Right cardiac atrium (tissue), 5 donors: ENCODE measurements at regions of chr4 and their contacts with region 1.

Region 1: GRCh38 chr4:119692001-119692400 is 63.4 kb upstream of the PDE5A start:
- DNase-seq: peak in 1 of 3 donors; percentile 48
- ATAC-seq: peak in 1 of 2 donors; percentile 76
- H3K4me3 ChIP-seq: no peak overlapping the region
- H3K27ac ChIP-seq: no peak overlapping the region
- H3K4me1 ChIP-seq: no peaks in the 10 kb centered on the region
- H3K27me3 ChIP-seq: no peaks in the 10 kb centered on the region

Region 2: GRCh38 chr4:119748853-119749252 is 56.9 kb after region 1 on chr4:
- intact Hi-C with region 1: no loop called
- DNase-seq: no peak
- ATAC-seq: peak; percentile 42 to 51
- H3K4me3 ChIP-seq: no peak overlapping the region
- H3K27ac ChIP-seq: no peak overlapping the region
- H3K4me1 ChIP-seq: peaks cover 2% of the 10 kb centered on the region
- H3K27me3 ChIP-seq: no peaks in the 10 kb centered on the region

Region 3: GRCh38 chr4:119785963-119786362 is 94.0 kb after region 1 on chr4:
- intact Hi-C with region 1: loop called in 1 of 4 experiments (anchors 10 kb)
- DNase-seq: peak in 2 of 3 donors; percentile 11 to 61
- ATAC-seq: no peak
- H3K4me3 ChIP-seq: no peak overlapping the region
- H3K27ac ChIP-seq: no peak overlapping the region
- H3K4me1 ChIP-seq: no peaks in the 10 kb centered on the region
- H3K27me3 ChIP-seq: no peaks in the 10 kb centered on the region